BJ (cell line): ENCODE measurements at regions of chr11 and their contacts with region 1.

Region 1: GRCh38 chr11:11966826-11967668 is 41.4 kb downstream of the DKK3 start:
- DNase-seq: no peak
- H3K4me3 ChIP-seq: no peak overlapping the region
- H3K27me3 ChIP-seq: no peaks in the 10 kb centered on the region
- CTCF ChIP-seq: peak; percentile 69

Region 2: GRCh38 chr11:11946180-11946579 is 20.9 kb before region 1 on chr11:
- CTCF ChIA-PET with region 1: interaction called, 12 read pairs
- POLR2A ChIA-PET with region 1: no interaction called
- DNase-seq: peak; percentile 59
- H3K4me3 ChIP-seq: no peak overlapping the region
- H3K27me3 ChIP-seq: no peaks in the 10 kb centered on the region
- CTCF ChIP-seq: no peak

Region 3: DNA sequence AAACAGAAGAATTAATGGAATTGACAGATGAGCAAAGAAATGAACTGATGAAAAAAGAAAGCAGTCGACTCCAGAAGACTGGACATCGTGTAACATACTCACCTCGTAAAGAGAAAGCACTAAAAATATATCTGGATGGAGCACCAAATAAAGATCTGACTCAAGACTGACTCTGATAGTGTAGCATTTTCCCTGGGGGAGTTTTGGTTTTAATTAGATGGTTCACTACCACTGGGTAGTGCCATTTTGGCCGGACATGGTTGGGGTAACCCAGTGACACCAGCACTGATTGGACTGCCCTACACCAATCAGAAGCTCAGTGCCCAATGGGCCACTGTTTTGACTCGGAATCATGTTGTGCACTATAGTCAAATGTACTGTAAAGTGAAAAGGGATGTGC is 11.0 kb before region 1 on chr11:
- CTCF ChIA-PET with region 1: interaction called, 16 read pairs
- POLR2A ChIA-PET with region 1: no interaction called
- DNase-seq: no peak
- H3K4me3 ChIP-seq: no peak overlapping the region
- H3K27me3 ChIP-seq: no peaks in the 10 kb centered on the region
- CTCF ChIP-seq: no peak

Region 4: DNA sequence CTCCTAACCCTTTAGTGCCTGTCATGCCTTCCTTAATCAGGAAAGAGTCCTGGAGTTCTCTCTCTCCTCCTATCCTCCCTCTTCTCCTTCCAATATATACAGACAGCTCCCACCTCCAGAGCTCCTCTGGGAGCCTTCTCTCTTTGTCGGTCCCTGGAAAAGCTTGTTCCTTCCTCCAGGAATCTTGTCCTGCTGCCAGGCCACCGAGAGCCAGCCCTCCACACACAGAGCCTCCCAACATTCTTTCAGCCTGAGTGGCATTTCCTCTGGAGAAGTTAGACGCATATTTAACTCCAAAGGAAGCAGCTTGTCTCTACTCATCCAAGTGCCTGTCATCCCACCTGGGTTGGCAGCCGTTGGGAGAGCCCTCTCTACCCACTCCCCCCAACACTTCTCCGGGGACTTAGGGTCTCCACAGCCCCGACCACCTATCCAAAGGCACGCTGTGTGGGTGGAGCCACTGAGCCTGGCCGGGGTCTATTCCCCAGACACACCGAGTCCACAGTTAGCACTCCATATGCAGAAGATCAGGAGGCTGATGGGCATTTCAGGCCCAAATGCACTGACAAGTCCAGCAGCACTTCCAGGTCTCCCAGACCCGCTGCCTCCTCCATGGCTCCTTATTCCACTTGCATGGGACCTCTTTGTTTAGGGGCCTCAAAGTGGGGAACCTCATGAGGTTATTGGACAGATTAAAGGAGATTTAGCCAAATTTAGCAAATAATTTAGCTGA is 10.3 kb after region 1 on chr11:
- CTCF ChIA-PET with region 1: interaction called, 16 read pairs
- POLR2A ChIA-PET with region 1: no interaction called
- DNase-seq: peak; percentile 84
- H3K4me3 ChIP-seq: no peak overlapping the region
- H3K27me3 ChIP-seq: no peaks in the 10 kb centered on the region
- CTCF ChIP-seq: no peak